ENCODE measurements at regions of chr6 and their contacts with region 1.

Region 1: GRCh38 chr6:134097114-134097707 is 44.8 kb upstream of the SLC2A12 start:
- DNase-seq: peak; percentile 50
- H3K4me3 ChIP-seq: no peak overlapping the region
- H3K27ac ChIP-seq: no peak overlapping the region
- H3K27me3 ChIP-seq: no peaks in the 10 kb centered on the region
- CTCF ChIP-seq: peak; percentile 64

Region 2: DNA sequence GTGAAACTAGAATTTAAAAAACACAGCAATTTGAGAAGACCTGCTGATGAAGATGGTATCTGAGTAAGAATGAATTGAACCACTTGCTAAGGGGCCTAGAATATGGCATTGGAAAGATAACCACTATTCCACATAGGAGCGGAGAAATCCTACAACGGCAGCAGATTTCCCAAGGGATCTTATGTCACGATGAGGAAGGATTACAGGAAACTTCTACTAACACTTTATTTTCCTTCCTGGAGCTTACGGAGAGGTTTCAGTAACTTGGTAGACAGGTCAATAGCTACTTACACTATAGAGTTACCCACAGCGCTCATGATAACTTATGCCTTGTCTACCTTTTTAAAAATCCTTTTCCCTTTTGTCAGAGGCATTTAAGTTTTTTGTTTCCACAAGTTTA is 220.1 kb before region 1 on chr6:
- CTCF ChIA-PET with region 1: no interaction called
- POLR2A ChIA-PET with region 1: no interaction called
- DNase-seq: no peak
- H3K4me3 ChIP-seq: no peak overlapping the region
- H3K27ac ChIP-seq: no peak overlapping the region
- H3K27me3 ChIP-seq: no peaks in the 10 kb centered on the region
- CTCF ChIP-seq: no peak

Region 3: DNA sequence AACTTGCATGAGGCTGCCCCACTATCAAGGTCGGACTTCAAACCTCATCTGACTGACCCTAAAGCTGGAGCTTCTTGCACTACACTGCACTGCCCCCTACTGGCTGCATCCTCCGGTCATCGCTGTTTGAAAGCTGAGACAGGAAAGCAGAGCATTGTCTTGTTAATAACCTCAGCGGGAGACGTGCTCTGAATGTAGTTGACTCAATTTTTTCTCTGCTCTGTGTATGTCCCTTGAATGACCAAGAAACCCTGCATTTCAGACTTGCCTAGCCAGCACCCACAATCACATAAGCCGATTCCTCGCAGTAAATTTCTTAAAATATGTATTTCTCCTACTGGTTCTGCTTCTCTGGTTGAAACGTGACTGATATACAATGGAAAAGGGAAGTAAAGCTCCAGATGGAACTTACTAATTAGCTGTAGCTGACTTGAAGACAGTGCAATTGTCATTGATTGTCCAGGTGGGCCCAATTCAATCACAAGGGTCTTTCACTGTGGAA is 180.5 kb before region 1 on chr6:
- CTCF ChIA-PET with region 1: interaction called, 744 read pairs
- POLR2A ChIA-PET with region 1: interaction called, 3 read pairs
- DNase-seq: peak; percentile 89
- H3K4me3 ChIP-seq: no peak overlapping the region
- H3K27ac ChIP-seq: no peak overlapping the region
- H3K27me3 ChIP-seq: no peaks in the 10 kb centered on the region
- CTCF ChIP-seq: peak; percentile 97

Region 4: GRCh38 chr6:133939778-133940667 is 157.2 kb before region 1 on chr6:
- CTCF ChIA-PET with region 1: interaction called, 14 read pairs
- POLR2A ChIA-PET with region 1: no interaction called
- DNase-seq: no peak
- H3K4me3 ChIP-seq: no peak overlapping the region
- H3K27ac ChIP-seq: no peak overlapping the region
- H3K27me3 ChIP-seq: no peaks in the 10 kb centered on the region
- CTCF ChIP-seq: no peak

Region 5: DNA sequence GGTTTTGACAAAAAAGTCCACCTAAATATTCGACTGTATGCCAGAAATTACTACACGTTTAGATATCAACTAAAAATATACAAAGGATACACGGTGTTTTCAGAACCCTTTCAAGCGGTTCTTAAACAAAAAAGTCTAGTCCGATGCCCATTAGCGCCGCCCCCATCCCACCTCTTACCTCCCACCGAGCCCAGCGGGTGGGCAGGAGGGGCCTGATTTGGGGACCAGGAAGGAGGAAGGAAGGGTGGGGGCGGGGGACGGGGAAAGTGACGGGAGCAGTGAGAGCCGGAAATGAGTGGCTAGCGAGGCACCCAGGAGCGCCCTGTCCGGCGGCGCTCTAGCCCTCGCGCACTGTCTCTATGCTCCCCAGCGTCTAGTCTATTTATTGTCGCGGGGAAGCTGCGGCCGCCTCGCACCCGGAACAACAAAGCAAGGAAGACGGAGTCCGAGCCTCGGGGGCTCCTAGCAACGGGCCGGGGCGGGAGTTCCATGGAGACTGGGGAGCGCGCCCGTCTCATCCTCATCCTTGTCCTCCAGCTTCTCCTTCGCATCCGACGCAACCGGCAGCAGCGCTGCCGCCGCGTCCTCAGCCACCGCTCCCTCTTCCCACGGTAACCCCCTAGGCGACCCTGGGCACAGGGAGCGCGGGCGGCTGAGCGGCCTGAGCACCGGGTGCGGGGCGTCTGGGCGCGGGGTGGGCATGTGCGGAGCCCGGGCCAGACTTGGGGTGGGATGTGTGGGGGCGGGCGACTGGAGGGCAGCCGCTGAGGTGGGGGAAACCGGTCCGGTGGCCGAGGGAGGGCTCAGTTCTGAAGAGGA is 144.2 kb before region 1 on chr6 and contains the start of gene TBPL1:
- CTCF ChIA-PET with region 1: interaction called, 37 read pairs
- POLR2A ChIA-PET with region 1: no interaction called
- DNase-seq: peak; percentile 92
- H3K4me3 ChIP-seq: peak within 1 kb of the TSS; percentile 97
- H3K27ac ChIP-seq: peak within 1 kb of the TSS; percentile 92
- H3K27me3 ChIP-seq: no peaks in the 10 kb centered on the region
- CTCF ChIP-seq: no peak
- polyA plus RNA-seq, gene TBPL1: 54.1 and 71.2 TPM in 2 replicates

Region 6: GRCh38 chr6:133966654-133967329 is 130.4 kb before region 1 on chr6:
- CTCF ChIA-PET with region 1: interaction called, 29 read pairs
- POLR2A ChIA-PET with region 1: no interaction called
- DNase-seq: no peak
- H3K4me3 ChIP-seq: no peak overlapping the region
- H3K27ac ChIP-seq: no peak overlapping the region
- H3K27me3 ChIP-seq: no peaks in the 10 kb centered on the region
- CTCF ChIP-seq: no peak

Region 7: DNA sequence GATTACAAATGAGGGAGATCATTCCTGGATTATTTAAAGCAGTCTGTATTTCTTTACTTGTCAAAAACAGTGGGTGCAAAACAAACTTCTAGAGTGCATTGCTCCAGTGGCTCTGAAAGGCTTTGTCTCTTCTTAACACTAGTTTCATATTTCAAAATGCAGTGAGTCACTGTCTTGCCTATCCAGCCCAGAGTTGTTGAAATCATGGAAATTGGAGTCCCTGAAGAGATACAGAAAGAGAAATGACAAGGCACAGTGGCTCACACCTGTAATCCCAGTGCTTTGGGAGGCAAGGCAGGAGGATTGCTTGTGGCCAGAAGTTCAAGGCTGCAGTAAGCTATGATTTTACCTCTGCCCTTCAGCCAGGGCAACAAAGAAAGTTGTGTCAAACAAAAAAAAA is 56.1 kb before region 1 on chr6:
- CTCF ChIA-PET with region 1: no interaction called
- POLR2A ChIA-PET with region 1: no interaction called
- DNase-seq: no peak
- H3K4me3 ChIP-seq: no peak overlapping the region
- H3K27ac ChIP-seq: no peak overlapping the region
- H3K27me3 ChIP-seq: no peaks in the 10 kb centered on the region
- CTCF ChIP-seq: no peak

Region 8: DNA sequence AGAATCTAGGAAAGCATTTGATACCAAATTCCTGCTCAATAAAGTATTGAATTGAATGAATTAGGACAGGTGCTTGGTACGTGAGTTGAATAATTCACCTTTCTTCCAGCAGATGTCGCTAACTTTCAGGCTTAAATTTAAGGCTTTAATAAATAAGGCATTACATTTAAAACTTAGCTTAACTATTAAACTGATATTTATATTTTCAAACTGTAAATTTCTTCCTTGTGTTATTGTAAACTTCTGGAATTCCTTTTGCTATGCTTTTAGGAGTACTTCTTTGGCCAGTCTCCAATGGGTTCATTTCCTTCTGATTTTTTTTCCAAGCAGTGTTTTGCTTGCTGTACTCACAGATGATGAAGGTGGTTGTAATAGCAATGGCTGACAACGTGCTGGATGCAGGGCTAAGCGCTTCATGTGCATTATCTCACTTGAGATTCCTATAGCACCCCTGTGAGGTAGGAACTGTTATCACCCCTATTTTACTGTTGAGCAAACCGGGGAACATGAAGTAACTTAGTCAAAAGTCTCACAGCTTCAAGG is 26.5 kb after region 1 on chr6:
- CTCF ChIA-PET with region 1: interaction called, 18 read pairs
- POLR2A ChIA-PET with region 1: no interaction called
- DNase-seq: peak; percentile 75
- H3K4me3 ChIP-seq: no peak overlapping the region
- H3K27ac ChIP-seq: no peak overlapping the region
- H3K27me3 ChIP-seq: no peaks in the 10 kb centered on the region
- CTCF ChIP-seq: peak; percentile 63

Region 9: GRCh38 chr6:134247231-134247833 is 150.1 kb after region 1 on chr6:
- CTCF ChIA-PET with region 1: no interaction called
- POLR2A ChIA-PET with region 1: no interaction called
- DNase-seq: no peak
- H3K4me3 ChIP-seq: no peak overlapping the region
- H3K27ac ChIP-seq: no peak overlapping the region
- H3K27me3 ChIP-seq: no peaks in the 10 kb centered on the region
- CTCF ChIP-seq: no peak

Measured in AG04450 (cell line).